Lower lobe of right lung (tissue), 2 donors: ENCODE measurements at regions of chr12 and their contacts with region 1.

Region 1: GRCh38 chr12:109523071-109523470 is 45.6 kb downstream of the UBE3B start:
- DNase-seq: no peak
- ATAC-seq: no peak
- H3K4me3 ChIP-seq: no peak overlapping the region
- H3K27ac ChIP-seq: no peak overlapping the region
- H3K4me1 ChIP-seq: no peaks in the 10 kb centered on the region
- H3K27me3 ChIP-seq: no peaks in the 10 kb centered on the region
- CTCF ChIP-seq: no peak

Region 2: DNA sequence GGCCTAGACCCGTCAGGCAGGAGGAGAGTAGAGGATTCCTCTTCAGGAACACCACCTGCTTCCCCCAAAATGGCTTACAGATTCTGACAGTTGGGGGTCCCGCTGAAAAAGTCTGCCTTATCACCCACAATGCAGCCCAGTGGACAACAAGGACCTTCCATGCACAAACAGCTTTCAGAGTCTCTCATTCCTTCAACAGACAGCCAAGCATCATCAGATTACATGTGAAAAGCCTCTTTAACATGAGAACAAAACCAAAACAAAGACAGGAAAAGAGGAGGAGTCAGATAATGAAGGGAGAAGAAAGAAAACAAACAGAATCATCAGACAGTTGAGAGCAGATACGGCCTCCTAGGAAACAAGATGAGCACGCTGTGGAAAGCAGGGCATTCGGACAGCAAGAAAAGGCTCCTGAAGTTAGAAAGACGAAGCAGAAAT is 64.3 kb before region 1 on chr12:
- intact Hi-C with region 1: no loop called
- DNase-seq: no peak
- ATAC-seq: no peak
- H3K4me3 ChIP-seq: no peak overlapping the region
- H3K27ac ChIP-seq: peak overlapping the region; percentile 94
- H3K4me1 ChIP-seq: peaks cover 70% of the 10 kb centered on the region
- H3K27me3 ChIP-seq: no peaks in the 10 kb centered on the region
- CTCF ChIP-seq: no peak

Region 3: DNA sequence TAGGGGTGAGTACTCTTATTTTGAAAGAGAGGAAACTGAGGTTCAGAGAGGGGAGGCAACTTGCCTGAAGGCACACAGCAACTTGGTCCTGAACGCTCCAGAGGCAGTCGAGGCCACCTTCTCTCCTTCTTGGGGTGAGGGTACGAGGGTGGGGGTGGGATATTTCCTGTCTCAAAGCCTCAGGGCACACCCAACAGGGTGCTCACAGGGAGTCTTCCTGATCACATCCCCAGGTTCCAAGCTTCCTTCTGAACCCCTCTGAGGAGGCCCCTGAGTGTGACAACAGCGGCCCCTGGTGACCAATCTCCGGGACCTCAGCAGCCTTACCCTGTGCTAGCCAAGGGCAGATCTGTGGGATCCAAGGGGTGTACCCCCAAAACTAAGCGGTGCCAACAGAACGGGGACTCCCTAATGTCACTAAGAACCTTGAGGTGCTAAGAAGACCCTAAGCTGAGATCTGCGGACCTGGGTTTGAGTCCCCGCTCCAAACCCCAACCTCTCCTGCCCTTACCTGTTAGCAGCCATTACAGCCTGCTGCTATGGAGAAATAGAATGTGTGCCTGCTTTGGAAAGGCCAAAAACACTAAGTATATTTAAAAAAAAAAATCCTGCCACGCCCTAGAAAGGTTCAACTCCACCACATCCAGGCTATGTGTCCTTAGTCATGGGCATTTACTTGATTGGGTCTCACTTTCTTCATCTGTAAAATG is 252.3 kb after region 1 on chr12:
- intact Hi-C with region 1: loop called (anchors 10 kb)
- DNase-seq: peak; percentile 77
- ATAC-seq: peak; percentile 87 to 89
- H3K4me3 ChIP-seq: no peak overlapping the region
- H3K27ac ChIP-seq: no peak overlapping the region
- H3K4me1 ChIP-seq: peaks cover 12% of the 10 kb centered on the region
- H3K27me3 ChIP-seq: no peaks in the 10 kb centered on the region
- CTCF ChIP-seq: peak; percentile 88